ENCODE measurements at regions of chr12 and their contacts with region 1.

Region 1: DNA sequence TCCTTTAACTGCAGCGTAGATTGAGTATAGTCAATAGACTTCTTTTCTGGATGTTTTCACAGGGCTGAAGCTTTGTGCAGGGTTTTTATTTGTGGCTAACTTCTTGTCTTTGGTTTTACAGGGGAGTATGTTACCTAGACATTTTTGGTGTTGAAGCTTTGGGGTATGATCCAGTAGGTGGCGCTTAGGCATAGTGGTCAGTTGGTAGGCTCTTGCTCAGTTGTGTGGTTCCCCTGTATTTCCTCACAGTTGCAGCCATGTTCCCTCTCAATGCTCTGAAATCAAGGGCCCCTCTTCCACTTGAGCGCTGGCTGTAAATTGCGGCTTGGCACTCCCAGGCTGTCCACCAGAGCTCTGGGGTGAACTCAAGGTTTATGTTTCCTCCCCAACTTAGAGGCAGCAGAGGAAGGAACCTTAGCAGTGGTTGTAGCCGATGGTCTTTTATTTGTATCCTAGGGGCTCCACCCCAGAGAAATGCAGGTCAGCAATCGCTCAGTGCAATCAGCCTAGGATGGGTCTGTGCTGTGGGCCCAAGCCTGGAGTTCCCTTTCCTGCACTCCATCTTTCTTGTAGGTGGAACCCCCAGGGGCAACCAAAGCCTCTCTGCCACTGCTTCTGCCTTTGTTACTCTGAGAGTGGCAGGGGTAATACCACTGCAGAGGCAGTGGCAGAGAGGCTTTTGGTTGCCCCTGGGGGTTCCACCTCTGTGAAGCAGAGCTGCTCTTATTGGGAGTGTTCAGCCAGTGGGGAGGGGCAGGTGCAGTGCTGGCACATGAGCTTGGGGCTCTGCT is 55.1 kb downstream of the CMAS start:
- DNase-seq: peak in 2 of 4 donors; percentile 32 to 41
- ATAC-seq: peak; percentile 81
- H3K4me3 ChIP-seq: no peak overlapping the region
- H3K27ac ChIP-seq: no peak overlapping the region
- H3K4me1 ChIP-seq: peaks cover 11 to 13% of the 10 kb centered on the region in 2 donors
- H3K27me3 ChIP-seq: no peaks in the 10 kb centered on the region
- CTCF ChIP-seq: peak; percentile 34 to 50

Region 2: DNA sequence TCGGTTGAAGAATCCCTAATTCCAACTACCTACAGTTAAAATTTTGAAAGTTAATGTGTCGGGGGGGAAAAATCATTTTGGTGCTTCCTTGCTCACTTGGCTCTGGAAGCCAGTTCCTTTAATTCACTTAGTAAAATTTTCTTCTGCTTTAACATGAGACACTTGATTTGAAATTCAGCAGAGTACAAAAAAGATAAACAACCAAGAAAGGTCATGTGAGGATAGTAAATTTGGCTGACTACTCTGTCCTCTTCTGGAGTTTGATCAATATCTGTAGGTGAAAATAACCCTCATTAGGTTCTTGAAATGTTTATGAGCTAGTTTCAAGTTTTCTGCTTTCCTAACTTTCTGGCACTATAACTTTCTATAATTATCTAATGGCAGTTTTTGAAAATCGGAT is 370.0 kb before region 1 on chr12:
- intact Hi-C with region 1: no loop called
- DNase-seq: no peak
- ATAC-seq: no peak
- H3K4me3 ChIP-seq: no peak overlapping the region
- H3K27ac ChIP-seq: no peak overlapping the region
- H3K4me1 ChIP-seq: no peaks in the 10 kb centered on the region
- H3K27me3 ChIP-seq: no peaks in the 10 kb centered on the region
- CTCF ChIP-seq: no peak

Region 3: DNA sequence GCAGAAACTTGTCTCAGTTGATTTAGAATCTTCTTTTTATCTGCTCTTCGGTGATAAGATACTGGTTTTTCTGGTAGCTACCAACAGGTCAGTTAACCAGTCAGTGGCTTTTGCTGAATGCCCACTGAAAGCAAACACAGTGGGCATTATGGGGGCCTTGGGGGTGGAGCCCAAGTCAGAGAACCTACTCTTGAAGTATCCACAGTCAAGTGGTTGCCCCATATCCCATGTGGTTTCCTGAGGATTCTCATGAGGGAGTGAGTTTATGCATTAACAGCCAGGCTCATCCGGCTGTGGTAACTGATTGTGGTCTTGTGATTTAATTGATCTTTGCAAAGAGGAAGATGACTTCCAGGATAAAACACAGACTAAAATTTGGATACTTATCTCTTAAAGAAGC is 149.6 kb after region 1 on chr12:
- intact Hi-C with region 1: no loop called
- DNase-seq: no peak
- ATAC-seq: no peak
- H3K4me3 ChIP-seq: no peak overlapping the region
- H3K27ac ChIP-seq: no peak overlapping the region
- H3K4me1 ChIP-seq: no peaks in the 10 kb centered on the region
- H3K27me3 ChIP-seq: no peaks in the 10 kb centered on the region
- CTCF ChIP-seq: no peak

Region 4: DNA sequence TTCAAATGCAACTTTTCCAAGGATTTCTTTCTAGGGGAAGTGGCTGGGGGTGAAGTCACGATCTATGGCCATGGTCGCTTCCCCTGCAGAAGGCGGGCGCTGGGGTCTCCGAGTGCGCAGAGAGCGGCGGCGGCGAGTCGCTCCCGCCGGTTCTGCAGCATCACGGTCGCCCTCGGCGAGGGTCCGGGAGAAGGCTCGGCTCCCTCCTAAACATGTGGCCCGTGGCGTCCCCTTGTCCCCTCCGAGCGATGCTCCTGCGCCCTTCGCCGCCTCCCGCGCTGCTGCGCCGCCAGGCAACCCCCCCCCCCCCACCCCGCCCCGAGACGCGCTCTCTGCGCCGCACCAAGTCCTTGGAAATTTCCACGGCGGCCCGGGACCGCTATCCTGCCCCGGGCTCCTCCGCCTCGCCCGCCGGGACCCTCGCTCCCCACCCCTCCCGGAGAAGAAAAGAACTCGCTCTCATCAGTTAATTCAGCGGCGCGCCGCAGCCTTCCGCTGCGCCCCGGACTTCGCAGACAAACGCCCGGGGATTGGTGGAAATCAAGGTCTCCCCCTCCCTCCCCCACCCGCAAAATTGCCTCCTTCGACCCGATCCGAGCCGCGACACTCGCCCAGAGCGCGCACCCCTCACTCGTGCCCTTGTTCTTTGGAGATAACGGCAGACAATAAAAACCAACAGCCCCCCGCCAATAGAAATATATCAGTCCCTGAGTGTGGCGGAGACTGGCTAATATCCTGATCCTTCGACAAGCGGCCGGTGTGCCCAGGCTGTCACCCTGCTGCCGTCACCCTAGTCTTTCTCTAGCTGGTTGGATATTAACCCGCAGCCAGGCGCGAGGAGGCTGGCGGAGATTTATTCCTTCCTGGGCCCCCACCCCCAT is 233.5 kb after region 1 on chr12 and contains the start of gene ST8SIA1:
- intact Hi-C with region 1: loop called in 1 of 2 experiments (anchors 5 kb)
- DNase-seq: peak in 2 of 4 donors; percentile 50 to 72
- ATAC-seq: peak; percentile 37
- H3K4me3 ChIP-seq: peak within 1 kb of the TSS; percentile 39 to 47
- H3K27ac ChIP-seq: peak within 1 kb of the TSS in 1 of 2 donors; percentile 58
- H3K4me1 ChIP-seq: peaks cover 0 to 11% of the 10 kb centered on the region in 2 donors
- H3K27me3 ChIP-seq: peaks cover 14 to 43% of the 10 kb centered on the region in 2 donors
- CTCF ChIP-seq: no peak
- polyA plus RNA-seq, gene ST8SIA1: 8.3 to 15.8 (median 10.4) TPM